Naive thymus-derived CD8-positive, alpha-beta T cell (primary cell): ENCODE measurements at regions of chr11 and their contacts with region 1.

Region 1: GRCh38 chr11:65888163-65888814 is at the start of gene FIBP:
- DNase-seq: peak; percentile 85 to 98 (median 91)
- ATAC-seq: peak; percentile 50 to 57
- H3K4me3 Mint-ChIP-seq: peak within 1 kb of the TSS; percentile 87 to 96 (median 90)
- H3K27ac Mint-ChIP-seq: peak within 1 kb of the TSS; percentile 94 to 100 (median 99)
- H3K4me1 Mint-ChIP-seq: peaks cover 38 to 79% (median 72%) of the 10 kb centered on the region in 4 donors
- H3K27me3 Mint-ChIP-seq: no peaks in the 10 kb centered on the region
- polyA plus RNA-seq, gene FIBP: 74.9 to 97.6 (median 86.0) TPM

Region 2: DNA sequence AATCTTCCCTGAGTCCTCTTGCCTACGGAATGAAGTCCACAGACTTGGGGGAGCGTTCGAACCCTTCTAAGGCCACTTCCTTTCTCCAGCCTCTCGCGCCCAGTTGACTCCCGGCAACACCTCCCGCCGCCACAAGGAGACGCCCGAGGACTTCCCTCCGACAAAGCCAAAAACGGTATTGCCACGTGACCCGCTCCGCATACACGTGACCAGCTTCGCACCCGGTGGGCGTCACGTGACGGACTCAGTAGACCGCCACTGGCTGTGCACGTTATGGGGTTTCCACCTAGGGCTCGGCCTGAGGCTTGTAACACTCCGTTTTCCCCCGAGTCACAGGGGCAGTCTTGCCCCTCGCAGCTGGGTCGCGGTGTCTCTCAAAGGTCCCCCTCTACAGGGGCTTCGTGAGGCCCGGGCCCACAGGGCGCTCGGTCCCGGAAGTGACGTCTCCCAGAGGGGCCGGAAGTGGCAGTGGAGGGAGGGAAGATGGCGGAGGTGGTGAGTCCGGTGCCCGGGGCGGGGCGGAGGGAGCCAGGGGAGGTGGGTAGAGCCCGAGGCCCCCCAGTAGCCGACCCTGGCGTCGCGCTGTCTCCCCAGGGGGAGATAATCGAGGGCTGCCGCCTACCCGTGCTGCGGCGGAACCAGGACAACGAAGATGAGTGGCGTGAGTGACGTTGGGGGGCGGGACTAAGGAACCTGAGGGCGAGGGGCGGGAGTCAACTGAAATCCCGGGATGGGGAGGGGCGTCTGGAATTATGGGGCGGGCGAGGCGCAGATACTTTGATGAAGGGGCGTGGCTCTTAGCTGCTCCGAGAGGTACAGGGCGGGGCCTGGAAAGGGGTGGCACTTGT is 176.3 kb before region 1 on chr11 and contains the start of gene KAT5:
- POLR2A ChIA-PET with region 1: interaction called, 27 read pairs
- DNase-seq: peak; percentile 93 to 100 (median 97)
- ATAC-seq: peak; percentile 86
- H3K4me3 Mint-ChIP-seq: peak within 1 kb of the TSS; percentile 92 to 100 (median 94)
- H3K27ac Mint-ChIP-seq: peak within 1 kb of the TSS; percentile 98 to 100 (median 99)
- H3K4me1 Mint-ChIP-seq: peaks cover 16 to 46% (median 35%) of the 10 kb centered on the region in 4 donors
- H3K27me3 Mint-ChIP-seq: no peaks in the 10 kb centered on the region
- polyA plus RNA-seq, gene KAT5: 38.0 to 57.3 (median 54.0) TPM

Region 3: GRCh38 chr11:65826962-65827735 is 61.1 kb before region 1 on chr11:
- POLR2A ChIA-PET with region 1: no interaction called
- DNase-seq: no peak
- ATAC-seq: no peak
- H3K4me3 Mint-ChIP-seq: no peak overlapping the region
- H3K27ac Mint-ChIP-seq: no peak overlapping the region
- H3K4me1 Mint-ChIP-seq: peaks cover 0 to 10% (median 4%) of the 10 kb centered on the region in 4 donors
- H3K27me3 Mint-ChIP-seq: peaks cover 0 to 2% (median 0%) of the 10 kb centered on the region in 5 donors

Region 4: GRCh38 chr11:65900125-65900898 is 12.0 kb after region 1 on chr11 and contains the start of gene FOSL1:
- POLR2A ChIA-PET with region 1: interaction called, 105 read pairs
- DNase-seq: peak; percentile 85 to 95 (median 91)
- ATAC-seq: peak; percentile 93 to 98
- H3K4me3 Mint-ChIP-seq: peak within 1 kb of the TSS; percentile 57 to 80 (median 74)
- H3K27ac Mint-ChIP-seq: peak within 1 kb of the TSS in 9 of 10 donors; percentile 41 to 94 (median 72)
- H3K4me1 Mint-ChIP-seq: peaks cover 2 to 24% (median 10%) of the 10 kb centered on the region in 4 donors
- H3K27me3 Mint-ChIP-seq: peaks cover 0 to 4% (median 0%) of the 10 kb centered on the region in 5 donors
- polyA plus RNA-seq, gene FOSL1: 0.17 to 0.22 TPM in 2 of 3 donors, not detected in the other

Region 5: DNA sequence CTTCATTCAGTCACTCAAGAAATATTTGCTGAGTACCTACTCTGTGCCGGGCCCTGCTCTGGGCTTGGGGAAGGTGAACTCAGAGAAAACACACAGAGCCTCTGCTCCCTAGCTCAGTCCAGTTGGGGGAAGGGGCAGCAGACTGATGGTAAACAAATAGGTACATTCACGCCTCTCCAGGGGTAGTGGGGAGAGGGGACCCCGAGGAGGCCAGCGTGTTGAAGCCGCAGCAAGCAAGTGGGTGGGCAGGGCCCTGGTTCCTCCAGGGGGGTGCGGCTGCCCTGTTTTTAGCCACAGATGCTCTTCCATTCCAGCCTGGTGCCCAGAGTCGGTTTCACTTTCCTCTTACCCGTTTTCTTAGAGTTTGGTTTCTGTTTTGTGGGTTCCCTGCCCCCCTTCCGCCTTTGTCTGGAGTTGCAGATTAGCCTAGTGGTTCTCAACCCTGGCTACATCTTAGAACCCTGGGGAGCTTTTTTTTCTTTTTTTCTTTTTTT is 39.7 kb after region 1 on chr11:
- POLR2A ChIA-PET with region 1: interaction called, 183 read pairs
- DNase-seq: peak; percentile 49 to 90 (median 77)
- ATAC-seq: peak; percentile 92 to 96
- H3K4me3 Mint-ChIP-seq: peak overlapping the region; percentile 65 to 86 (median 74)
- H3K27ac Mint-ChIP-seq: peak overlapping the region; percentile 88 to 99 (median 97)
- H3K4me1 Mint-ChIP-seq: peaks cover 23 to 61% (median 48%) of the 10 kb centered on the region in 4 donors
- H3K27me3 Mint-ChIP-seq: no peaks in the 10 kb centered on the region

Region 6: GRCh38 chr11:66001942-66002647 is 113.8 kb after region 1 on chr11 and contains the starts of genes BANF1 and EIF1AD:
- POLR2A ChIA-PET with region 1: interaction called, 16 read pairs
- DNase-seq: peak; percentile 69 to 99 (median 94)
- ATAC-seq: peak; percentile 79 to 88
- H3K4me3 Mint-ChIP-seq: peak within 1 kb of the TSS; percentile 98 to 100 (median 99)
- H3K27ac Mint-ChIP-seq: peak within 1 kb of the TSS; percentile 98 to 100 (median 99)
- H3K4me1 Mint-ChIP-seq: peaks cover 17 to 54% (median 48%) of the 10 kb centered on the region in 4 donors
- H3K27me3 Mint-ChIP-seq: no peaks in the 10 kb centered on the region
- polyA plus RNA-seq, gene BANF1: 225 to 250 (median 241) TPM
- polyA plus RNA-seq, gene EIF1AD: 11.5 to 18.7 (median 14.3) TPM

Region 7: DNA sequence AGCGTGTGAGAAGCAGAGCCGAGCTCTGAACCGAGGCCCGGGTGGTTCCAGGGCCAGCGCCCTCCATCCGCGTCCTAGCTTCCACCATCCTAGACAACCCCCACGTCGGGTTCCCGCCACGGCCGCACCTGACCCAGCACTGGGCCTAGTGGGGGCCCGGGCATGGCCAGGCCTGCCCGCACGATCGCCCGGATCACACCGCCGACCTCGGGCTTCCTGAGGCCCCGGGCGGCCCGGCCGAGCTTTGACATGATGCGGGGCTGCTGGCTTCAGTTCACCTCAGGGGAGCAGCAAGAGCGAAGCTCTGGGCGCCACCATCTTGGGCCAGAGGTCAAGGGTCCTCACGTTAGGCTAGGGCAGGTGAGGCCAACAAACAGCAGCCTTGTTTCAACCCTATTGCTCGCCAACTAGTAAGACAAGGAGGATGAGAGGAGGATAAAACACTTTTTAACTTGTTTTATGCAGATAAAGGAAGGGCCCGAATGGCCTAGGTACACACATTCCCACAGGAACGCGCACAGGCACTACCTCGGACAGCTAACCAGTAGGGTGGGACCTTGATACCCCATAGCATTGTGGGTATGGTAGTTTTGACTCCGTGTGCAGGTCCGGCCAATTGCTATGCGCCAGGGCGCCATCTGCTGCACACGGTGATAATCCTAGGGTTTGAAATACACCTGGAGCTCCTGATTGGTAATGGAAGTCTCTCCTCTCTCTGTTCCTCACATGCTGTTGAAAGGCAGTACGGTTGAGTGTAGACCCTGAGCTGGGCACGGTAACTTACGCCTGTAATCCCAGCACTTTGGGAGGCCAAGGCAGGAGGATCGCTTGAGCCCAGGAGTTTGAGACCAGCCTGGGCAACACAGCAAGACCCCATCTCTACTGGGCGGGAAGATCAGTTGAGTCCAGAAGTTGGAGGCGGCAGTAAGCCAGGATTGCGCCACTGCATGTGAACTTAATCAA is 550.5 kb after region 1 on chr11 and contains the start of gene MRPL11:
- POLR2A ChIA-PET with region 1: no interaction called
- DNase-seq: peak; percentile 74 to 95 (median 88)
- ATAC-seq: peak; percentile 96 to 98
- H3K4me3 Mint-ChIP-seq: peak within 1 kb of the TSS; percentile 87 to 96 (median 92)
- H3K27ac Mint-ChIP-seq: peak within 1 kb of the TSS; percentile 24 to 99 (median 98)
- H3K4me1 Mint-ChIP-seq: peaks cover 5 to 16% (median 9%) of the 10 kb centered on the region in 4 donors
- H3K27me3 Mint-ChIP-seq: peaks cover 0 to 6% (median 0%) of the 10 kb centered on the region in 5 donors
- polyA plus RNA-seq, gene MRPL11: 86.9 to 98.2 (median 87.9) TPM